ENCODE measurements at regions of chr3 and their contacts with region 1.

Region 1: GRCh38 chr3:100068826-100069225 is 45.5 kb downstream of the FILIP1L start:
- DNase-seq: peak; percentile 52 to 79 (median 70)
- ATAC-seq: peak; percentile 95
- H3K4me3 ChIP-seq: no peak overlapping the region
- H3K4me3 Mint-ChIP-seq: peak overlapping the region in 2 of 10 donors; percentile 29 to 40
- H3K27ac ChIP-seq: no peak overlapping the region
- H3K27ac Mint-ChIP-seq: peak overlapping the region in 2 of 9 donors; percentile 46 to 53
- H3K4me1 ChIP-seq: peaks cover 9 to 16% of the 10 kb centered on the region in 2 donors
- H3K4me1 Mint-ChIP-seq: peaks cover 17 to 47% (median 33%) of the 10 kb centered on the region in 7 donors
- H3K27me3 ChIP-seq: no peaks in the 10 kb centered on the region
- H3K27me3 Mint-ChIP-seq: no peaks in the 10 kb centered on the region

Region 2: GRCh38 chr3:99366663-99367429 is 702.0 kb before region 1 on chr3:
- CTCF ChIA-PET with region 1: no interaction called
- POLR2A ChIA-PET with region 1: no interaction called
- intact Hi-C with region 1: no loop called
- DNase-seq: no peak
- ATAC-seq: no peak
- H3K4me3 ChIP-seq: no peak overlapping the region
- H3K4me3 Mint-ChIP-seq: no peak overlapping the region
- H3K27ac ChIP-seq: no peak overlapping the region
- H3K27ac Mint-ChIP-seq: no peak overlapping the region
- H3K4me1 ChIP-seq: no peaks in the 10 kb centered on the region
- H3K4me1 Mint-ChIP-seq: no peaks in the 10 kb centered on the region
- H3K27me3 ChIP-seq: no peaks in the 10 kb centered on the region
- H3K27me3 Mint-ChIP-seq: no peaks in the 10 kb centered on the region

Region 3: GRCh38 chr3:99833617-99834205 is 235.1 kb before region 1 on chr3:
- CTCF ChIA-PET with region 1: no interaction called
- POLR2A ChIA-PET with region 1: no interaction called
- intact Hi-C with region 1: loop called in 1 of 2 experiments (anchors 5 kb)
- DNase-seq: no peak
- ATAC-seq: no peak
- H3K4me3 ChIP-seq: no peak overlapping the region
- H3K4me3 Mint-ChIP-seq: no peak overlapping the region
- H3K27ac ChIP-seq: no peak overlapping the region
- H3K27ac Mint-ChIP-seq: no peak overlapping the region
- H3K4me1 ChIP-seq: no peaks in the 10 kb centered on the region
- H3K4me1 Mint-ChIP-seq: peaks cover 0 to 11% (median 4%) of the 10 kb centered on the region in 7 donors
- H3K27me3 ChIP-seq: no peaks in the 10 kb centered on the region
- H3K27me3 Mint-ChIP-seq: no peaks in the 10 kb centered on the region

Region 4: GRCh38 chr3:99842826-99843589 is 225.8 kb before region 1 on chr3:
- CTCF ChIA-PET with region 1: no interaction called
- POLR2A ChIA-PET with region 1: no interaction called
- intact Hi-C with region 1: loop called in 1 of 2 experiments (anchors 1 kb)
- DNase-seq: no peak
- ATAC-seq: peak; percentile 51
- H3K4me3 ChIP-seq: no peak overlapping the region
- H3K4me3 Mint-ChIP-seq: no peak overlapping the region
- H3K27ac ChIP-seq: no peak overlapping the region
- H3K27ac Mint-ChIP-seq: no peak overlapping the region
- H3K4me1 ChIP-seq: no peaks in the 10 kb centered on the region
- H3K4me1 Mint-ChIP-seq: peaks cover 0 to 27% (median 9%) of the 10 kb centered on the region in 7 donors
- H3K27me3 ChIP-seq: no peaks in the 10 kb centered on the region
- H3K27me3 Mint-ChIP-seq: no peaks in the 10 kb centered on the region

Region 5: GRCh38 chr3:100089812-100090668 is 21.2 kb after region 1 on chr3:
- CTCF ChIA-PET with region 1: interaction called, 3 read pairs
- POLR2A ChIA-PET with region 1: no interaction called
- intact Hi-C with region 1: loop called in 1 of 2 experiments (anchors 1 kb)
- DNase-seq: no peak
- ATAC-seq: peak; percentile 63
- H3K4me3 ChIP-seq: no peak overlapping the region
- H3K4me3 Mint-ChIP-seq: peak overlapping the region in 1 of 10 donors; percentile 36
- H3K27ac ChIP-seq: no peak overlapping the region
- H3K27ac Mint-ChIP-seq: peak overlapping the region in 1 of 9 donors; percentile 34
- H3K4me1 ChIP-seq: no peaks in the 10 kb centered on the region
- H3K4me1 Mint-ChIP-seq: peaks cover 0 to 36% (median 0%) of the 10 kb centered on the region in 7 donors
- H3K27me3 ChIP-seq: no peaks in the 10 kb centered on the region
- H3K27me3 Mint-ChIP-seq: peaks cover 0 to 3% (median 0%) of the 10 kb centered on the region in 5 donors

Region 6: DNA sequence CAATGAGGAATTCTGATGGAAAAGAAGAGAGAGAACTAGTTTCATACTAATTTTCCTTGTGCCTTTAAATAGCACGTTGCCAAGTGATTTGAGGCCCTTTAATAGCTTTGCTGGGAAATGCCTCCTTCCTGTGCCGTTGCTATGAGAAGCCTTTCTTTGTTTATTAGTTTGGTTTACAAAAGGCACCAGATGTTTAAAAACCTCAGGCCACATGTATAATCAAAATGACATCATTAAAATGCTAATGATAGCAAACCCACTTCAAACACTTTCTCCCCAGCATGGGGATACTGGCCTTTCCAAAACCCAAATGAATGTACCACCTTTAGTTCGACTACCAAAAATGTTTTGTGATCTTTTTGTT is 141.9 kb after region 1 on chr3:
- CTCF ChIA-PET with region 1: no interaction called
- POLR2A ChIA-PET with region 1: no interaction called
- intact Hi-C with region 1: loop called in 1 of 2 experiments (anchors 1 kb)
- DNase-seq: peak in 4 of 9 donors; percentile 1 to 25 (median 11)
- ATAC-seq: peak; percentile 54
- H3K4me3 ChIP-seq: no peak overlapping the region
- H3K4me3 Mint-ChIP-seq: peak overlapping the region in 6 of 10 donors; percentile 45 to 75 (median 64)
- H3K27ac ChIP-seq: no peak overlapping the region
- H3K27ac Mint-ChIP-seq: peak overlapping the region in 6 of 9 donors; percentile 41 to 92 (median 86)
- H3K4me1 ChIP-seq: peaks cover 10 to 12% of the 10 kb centered on the region in 2 donors
- H3K4me1 Mint-ChIP-seq: peaks cover 10 to 32% (median 16%) of the 10 kb centered on the region in 7 donors
- H3K27me3 ChIP-seq: no peaks in the 10 kb centered on the region
- H3K27me3 Mint-ChIP-seq: peaks cover 0 to 5% (median 0%) of the 10 kb centered on the region in 5 donors

Region 7: GRCh38 chr3:100254168-100254777 is 185.4 kb after region 1 on chr3:
- CTCF ChIA-PET with region 1: interaction called, 23 read pairs
- POLR2A ChIA-PET with region 1: interaction called, 4 read pairs
- intact Hi-C with region 1: loop called (anchors 1 kb)
- DNase-seq: peak in 6 of 9 donors; percentile 12 to 44 (median 22)
- ATAC-seq: peak; percentile 70
- H3K4me3 ChIP-seq: no peak overlapping the region
- H3K4me3 Mint-ChIP-seq: no peak overlapping the region
- H3K27ac ChIP-seq: no peak overlapping the region
- H3K27ac Mint-ChIP-seq: no peak overlapping the region
- H3K4me1 ChIP-seq: no peaks in the 10 kb centered on the region
- H3K4me1 Mint-ChIP-seq: peaks cover 0 to 16% (median 11%) of the 10 kb centered on the region in 7 donors
- H3K27me3 ChIP-seq: no peaks in the 10 kb centered on the region
- H3K27me3 Mint-ChIP-seq: no peaks in the 10 kb centered on the region

Region 8: DNA sequence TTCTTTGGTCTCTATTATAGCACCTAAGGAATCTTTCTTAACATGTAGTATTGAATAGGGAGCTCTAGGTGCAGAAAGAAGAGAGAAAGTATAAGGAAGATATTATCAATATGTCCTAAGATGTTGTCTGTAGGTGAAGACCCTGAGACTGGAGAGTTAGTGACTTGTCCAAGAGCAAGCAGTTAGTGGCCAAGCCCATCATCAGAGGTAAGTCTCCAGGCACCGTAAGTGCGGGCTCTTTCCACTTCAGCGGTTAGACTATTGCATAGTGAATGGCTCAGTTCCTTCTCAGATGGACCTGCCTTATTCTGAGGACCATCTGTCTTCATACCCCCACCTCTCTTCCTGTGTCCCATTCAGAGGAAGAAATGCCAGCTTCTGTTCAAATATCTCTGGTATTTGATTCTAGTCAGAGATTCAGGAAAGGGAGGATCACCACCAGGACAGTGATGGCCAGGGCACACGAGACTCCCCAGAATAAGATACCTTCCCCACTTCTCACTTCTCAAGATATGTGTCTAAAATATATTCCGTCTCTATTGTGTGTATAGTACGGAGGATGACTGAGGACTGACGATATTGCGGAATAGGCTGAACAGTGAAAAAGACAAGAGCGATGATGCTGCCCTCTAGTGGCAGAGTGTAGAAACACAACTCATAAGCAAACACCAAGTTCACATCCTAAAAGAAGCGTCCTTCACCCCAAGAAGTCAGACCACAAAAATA is 521.5 kb after region 1 on chr3:
- CTCF ChIA-PET with region 1: no interaction called
- POLR2A ChIA-PET with region 1: no interaction called
- intact Hi-C with region 1: loop called (anchors 1 to 5 kb)
- DNase-seq: peak; percentile 24 to 73 (median 61)
- ATAC-seq: peak; percentile 98
- H3K4me3 ChIP-seq: no peak overlapping the region
- H3K4me3 Mint-ChIP-seq: peak overlapping the region in 7 of 10 donors; percentile 13 to 77 (median 60)
- H3K27ac ChIP-seq: no peak overlapping the region
- H3K27ac Mint-ChIP-seq: no peak overlapping the region
- H3K4me1 ChIP-seq: no peaks in the 10 kb centered on the region
- H3K4me1 Mint-ChIP-seq: peaks cover 0 to 8% (median 4%) of the 10 kb centered on the region in 7 donors
- H3K27me3 ChIP-seq: no peaks in the 10 kb centered on the region
- H3K27me3 Mint-ChIP-seq: peaks cover 0 to 12% (median 0%) of the 10 kb centered on the region in 5 donors

Measured in naive thymus-derived CD4-positive, alpha-beta T cell (primary cell).